Dorsolateral prefrontal cortex (tissue), 120 donors: ENCODE measurements at regions of chr4 and their contacts with region 1.

Region 1: GRCh38 chr4:90293320-90293719 is 166.1 kb downstream of the CCSER1 start:
- DNase-seq: no peak
- H3K4me3 ChIP-seq: no peak overlapping the region
- H3K27ac ChIP-seq: no peak overlapping the region
- H3K27me3 ChIP-seq: no peaks in the 10 kb centered on the region
- CTCF ChIP-seq: peak; percentile 37 to 75 (median 58)

Region 2: GRCh38 chr4:89914609-89915550 is 378.4 kb before region 1 on chr4:
- intact Hi-C with region 1: loop called in 1 of 2 experiments (anchors 10 kb)
- DNase-seq: no peak
- H3K4me3 ChIP-seq: no peak overlapping the region
- H3K27ac ChIP-seq: peak overlapping the region in 3 of 59 donors; percentile 9 to 39 (median 12)
- H3K27me3 ChIP-seq: peaks cover 0 to 4% (median 0%) of the 10 kb centered on the region in 45 donors
- CTCF ChIP-seq: peak in 48 of 56 donors; percentile 9 to 62 (median 38)